ENCODE measurements at regions of chrX and their contacts with region 1.

Region 1: GRCh38 chrX:43836435-43837184 is 45.6 kb downstream of the MAOB start:
- DNase-seq: peak; percentile 5
- ATAC-seq: no peak
- H3K4me3 ChIP-seq: no peak overlapping the region
- H3K27ac ChIP-seq: no peak overlapping the region
- H3K4me1 ChIP-seq: no peaks in the 10 kb centered on the region
- H3K27me3 ChIP-seq: no peaks in the 10 kb centered on the region
- CTCF ChIP-seq: peak; percentile 56; the same call in 1 of the 2 replicates

Region 2: DNA sequence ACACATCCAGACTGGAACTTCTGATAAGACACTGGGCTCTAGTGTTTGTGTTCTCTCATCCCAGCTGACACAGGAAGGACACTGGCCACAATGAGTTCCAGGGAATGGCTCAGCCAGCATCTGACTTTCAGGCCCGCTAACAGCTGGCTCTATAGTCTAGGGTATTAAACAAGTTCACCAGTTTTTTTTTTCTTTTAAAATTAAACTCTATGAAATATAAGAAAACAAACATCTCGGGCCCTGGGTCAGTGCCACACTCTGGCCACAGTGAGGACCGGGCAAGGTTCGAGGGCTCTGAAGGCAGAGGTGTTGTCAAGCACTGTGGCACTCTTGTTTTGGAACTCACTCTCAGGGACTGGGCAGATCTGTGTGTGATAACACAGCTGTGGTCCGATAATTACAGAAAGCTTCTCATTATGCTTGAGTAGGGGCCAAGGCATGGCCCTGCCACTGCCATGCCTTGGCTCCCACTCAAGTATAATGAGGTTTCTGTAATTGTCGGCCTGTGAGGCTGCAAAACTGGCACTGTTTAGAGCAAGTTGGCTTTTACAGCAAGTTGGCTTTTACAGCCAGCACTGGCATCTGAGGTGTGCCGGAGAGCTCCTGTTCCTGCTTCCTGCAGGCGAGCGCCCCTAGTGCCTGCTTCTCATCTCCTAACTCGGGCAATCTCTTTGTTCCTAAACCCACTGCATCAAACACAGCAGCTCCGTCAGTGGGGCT is 1121.5 kb before region 1 on chrX:
- CTCF ChIA-PET with region 1: interaction called, 20 read pairs
- POLR2A ChIA-PET with region 1: no interaction called
- in situ Hi-C with region 1: no loop called
- intact Hi-C with region 1: no loop called
- DNase-seq: no peak
- ATAC-seq: no peak
- H3K4me3 ChIP-seq: no peak overlapping the region
- H3K27ac ChIP-seq: no peak overlapping the region
- H3K4me1 ChIP-seq: no peaks in the 10 kb centered on the region
- H3K27me3 ChIP-seq: no peaks in the 10 kb centered on the region
- CTCF ChIP-seq: peak; percentile 49

Region 3: GRCh38 chrX:43939187-43939926 is 102.7 kb after region 1 on chrX:
- CTCF ChIA-PET with region 1: interaction called, 5 read pairs
- POLR2A ChIA-PET with region 1: no interaction called
- in situ Hi-C with region 1: no loop called
- intact Hi-C with region 1: loop called (anchors 10 kb)
- DNase-seq: no peak
- ATAC-seq: no peak
- H3K4me3 ChIP-seq: no peak overlapping the region
- H3K27ac ChIP-seq: no peak overlapping the region
- H3K4me1 ChIP-seq: no peaks in the 10 kb centered on the region
- H3K27me3 ChIP-seq: no peaks in the 10 kb centered on the region; the same call in none of the 2 replicates
- CTCF ChIP-seq: peak; percentile 10; the same call in 1 of the 2 replicates